ENCODE measurements at regions of chr6 and their contacts with region 1.

Region 1: GRCh38 chr6:40587240-40588069 is at the start of gene LRFN2:
- DNase-seq: peak; percentile 76 to 92
- ATAC-seq: peak; percentile 86
- H3K4me3 ChIP-seq: peak within 1 kb of the TSS in 1 of 2 donors; percentile 16
- H3K27ac ChIP-seq: no peak within 1 kb of the TSS
- H3K4me1 ChIP-seq: no peaks in the 10 kb centered on the region
- H3K27me3 ChIP-seq: no peaks in the 10 kb centered on the region
- total RNA-seq, gene LRFN2: not detected

Region 2: GRCh38 chr6:39980839-39981580 is 606.4 kb before region 1 on chr6:
- intact Hi-C with region 1: loop called in 1 of 2 experiments (anchors 5 kb)
- DNase-seq: no peak
- ATAC-seq: peak; percentile 89
- H3K4me3 ChIP-seq: no peak overlapping the region
- H3K27ac ChIP-seq: no peak overlapping the region
- H3K4me1 ChIP-seq: no peaks in the 10 kb centered on the region
- H3K27me3 ChIP-seq: no peaks in the 10 kb centered on the region

Region 3: DNA sequence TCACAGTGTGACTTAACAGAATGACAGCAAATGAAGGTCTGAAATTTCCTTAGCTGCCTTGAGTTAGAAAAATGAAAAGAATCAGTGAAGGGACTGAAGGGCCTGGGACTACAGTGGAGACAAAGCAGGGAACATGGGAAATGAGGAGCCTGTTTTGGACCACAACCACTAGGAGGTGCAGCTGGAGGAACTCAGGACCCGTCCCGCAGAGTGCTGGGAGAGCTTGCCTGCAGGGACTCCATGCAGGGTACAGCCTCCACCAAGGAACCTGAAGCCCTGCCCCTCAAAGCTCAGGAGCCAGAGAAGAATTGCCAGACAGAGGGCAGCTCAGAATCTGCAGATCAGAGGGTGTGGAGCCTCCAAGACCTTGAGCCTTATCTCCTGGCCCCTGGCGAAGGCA is 51.0 kb before region 1 on chr6:
- intact Hi-C with region 1: no loop called
- DNase-seq: peak in 1 of 2 donors; percentile 10
- ATAC-seq: no peak
- H3K4me3 ChIP-seq: no peak overlapping the region
- H3K27ac ChIP-seq: no peak overlapping the region
- H3K4me1 ChIP-seq: no peaks in the 10 kb centered on the region
- H3K27me3 ChIP-seq: no peaks in the 10 kb centered on the region